Activated CD8-positive, alpha-beta memory T cell treated with anti-CD3 and anti-CD28 coated beads, Interleukin-2, amount 10 ng/mL, durations not matched to agents 7 days and 5 days (primary cell): ENCODE measurements at regions of chr12 and their contacts with region 1.

Region 1: DNA sequence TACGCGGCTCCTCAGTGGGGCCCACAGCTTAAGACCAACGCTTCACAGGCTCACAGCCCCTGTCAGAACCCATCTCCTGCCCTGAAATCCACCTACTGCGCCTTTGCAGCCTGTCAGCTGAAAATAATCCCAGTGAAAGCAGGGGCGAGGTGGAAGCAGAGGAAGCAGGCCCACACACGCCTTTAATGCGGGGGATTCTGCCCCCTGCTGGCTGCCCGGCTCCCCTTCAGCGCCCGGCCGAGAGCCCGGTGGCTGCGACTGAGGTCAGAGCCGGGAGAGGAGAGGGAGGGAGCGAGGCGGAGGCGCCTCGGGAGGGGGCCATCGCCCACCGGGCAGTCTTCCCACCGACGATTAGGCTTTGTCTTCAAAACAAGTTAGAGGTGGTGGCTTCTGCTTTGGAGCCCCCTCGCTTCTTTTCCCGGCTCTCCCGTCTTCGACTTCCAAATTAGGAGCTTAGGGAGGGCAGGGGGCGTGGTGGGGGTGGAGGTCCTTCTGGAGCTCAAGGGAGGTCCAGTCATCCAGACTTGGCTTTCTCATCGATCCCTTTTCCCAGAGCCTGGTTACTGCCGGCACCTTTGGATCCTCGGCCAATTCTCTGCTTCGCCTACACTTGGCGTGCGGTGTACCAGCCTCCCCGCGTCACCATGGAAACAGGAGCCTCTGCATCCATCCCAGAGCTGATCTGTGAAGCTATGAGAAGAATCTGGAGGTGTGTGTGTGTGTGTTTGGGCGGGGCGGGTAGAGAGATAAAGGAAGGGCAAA is 25.2 kb upstream of the RND1 start:
- DNase-seq: peak; percentile 81
- ATAC-seq: peak; percentile 100
- H3K4me3 Mint-ChIP-seq: peak overlapping the region; percentile 7
- H3K27ac Mint-ChIP-seq: no peak overlapping the region
- H3K4me1 Mint-ChIP-seq: peaks cover 10% of the 10 kb centered on the region
- H3K27me3 Mint-ChIP-seq: peaks cover 17% of the 10 kb centered on the region

Region 2: DNA sequence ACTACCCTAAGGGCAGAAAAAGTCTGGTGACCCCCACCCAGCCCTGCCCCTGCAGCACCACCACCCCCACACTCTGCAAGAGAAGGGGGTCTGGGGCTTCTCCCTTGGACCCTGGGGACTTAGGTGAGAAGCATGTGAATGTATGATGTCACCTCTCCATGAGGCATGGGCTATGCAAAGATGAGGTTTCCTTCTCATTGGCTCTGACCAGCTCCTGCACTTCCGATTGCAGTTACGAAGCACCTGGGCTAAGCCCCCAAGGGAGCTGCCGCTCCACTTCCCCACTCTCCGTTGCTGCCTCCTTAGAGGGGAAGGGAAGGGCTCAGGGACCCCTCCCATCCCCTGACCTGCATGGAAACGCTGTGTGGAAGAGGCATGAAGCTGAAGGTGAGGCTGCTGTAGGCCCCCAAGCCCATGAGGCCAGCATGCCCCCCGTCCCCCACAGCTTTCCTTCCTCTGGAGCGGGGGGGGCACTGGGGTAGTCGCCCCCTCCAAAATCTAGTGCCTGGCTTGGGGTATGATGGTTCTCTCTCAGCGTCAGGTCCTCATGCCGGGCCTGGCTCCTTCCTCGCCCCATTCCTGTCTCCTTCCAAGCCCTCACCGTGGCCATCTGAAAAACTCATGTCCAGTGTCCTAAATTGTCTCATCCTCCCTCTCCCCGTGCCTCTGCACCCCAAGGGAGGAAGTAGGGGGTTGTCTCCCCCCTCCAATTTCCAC is 33.4 kb before region 1 on chr12:
- CTCF ChIA-PET with region 1: interaction called, 211 read pairs
- DNase-seq: no peak
- ATAC-seq: no peak
- H3K4me3 Mint-ChIP-seq: no peak overlapping the region
- H3K27ac Mint-ChIP-seq: no peak overlapping the region
- H3K4me1 Mint-ChIP-seq: peaks cover 13% of the 10 kb centered on the region
- H3K27me3 Mint-ChIP-seq: peaks cover under 1% of the 10 kb centered on the region

Region 3: DNA sequence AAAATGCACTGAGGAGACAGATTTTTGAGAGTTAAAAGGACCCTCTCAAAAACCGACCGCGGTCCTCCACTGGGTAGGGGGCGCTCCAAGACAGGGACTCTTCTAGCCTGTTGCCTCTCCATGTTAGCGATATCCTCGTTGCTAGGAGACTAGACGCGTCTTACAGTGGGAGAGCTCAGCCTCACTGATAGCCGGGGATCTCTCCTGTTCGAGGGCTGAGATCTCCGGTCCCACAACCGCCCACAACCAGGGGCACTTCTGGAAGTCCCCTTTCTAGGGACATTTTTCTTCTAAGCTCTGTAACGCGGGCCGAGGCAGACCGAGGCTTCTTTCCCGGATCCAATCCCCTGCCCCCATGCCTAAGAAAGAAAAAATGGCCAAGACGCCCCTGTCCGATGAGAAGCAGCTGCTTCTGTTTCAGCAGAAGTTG is 13.2 kb after region 1 on chr12:
- CTCF ChIA-PET with region 1: interaction called, 82 read pairs
- DNase-seq: peak; percentile 88
- ATAC-seq: peak; percentile 91
- H3K4me3 Mint-ChIP-seq: peak overlapping the region; percentile 38
- H3K27ac Mint-ChIP-seq: peak overlapping the region; percentile 68
- H3K4me1 Mint-ChIP-seq: peaks cover 19% of the 10 kb centered on the region
- H3K27me3 Mint-ChIP-seq: peaks cover 9% of the 10 kb centered on the region

Region 4: DNA sequence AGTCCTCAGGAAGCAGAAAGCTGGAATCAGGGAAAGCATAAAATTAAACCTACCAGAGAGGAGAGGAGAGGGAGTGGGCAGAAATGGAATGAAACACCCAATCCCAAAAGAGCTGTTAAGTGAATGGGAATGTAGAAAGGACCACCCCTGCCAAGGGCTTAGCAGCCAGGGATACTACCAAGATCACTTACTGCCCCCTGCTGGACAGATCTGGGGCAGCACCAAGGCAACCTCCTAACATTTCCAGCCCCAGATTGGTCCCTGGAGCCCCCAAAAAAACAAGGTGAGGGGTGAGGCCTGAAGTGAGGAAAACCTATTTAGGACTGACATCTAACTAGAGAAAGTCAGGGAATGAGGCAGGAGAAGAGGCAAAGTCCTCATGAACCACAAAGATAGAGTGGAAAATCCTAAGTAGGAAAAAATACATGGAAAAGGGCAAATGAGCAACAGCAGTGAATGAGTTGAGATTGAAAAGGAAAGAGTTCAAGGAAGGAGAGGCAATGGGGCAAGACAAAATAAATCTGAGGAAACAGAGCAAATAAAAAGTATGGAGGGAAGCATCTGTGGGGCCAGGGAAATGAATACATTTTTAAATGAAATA is 45.6 kb after region 1 on chr12:
- CTCF ChIA-PET with region 1: interaction called, 16 read pairs
- DNase-seq: peak; percentile 88
- ATAC-seq: peak; percentile 57
- H3K4me3 Mint-ChIP-seq: no peak overlapping the region
- H3K27ac Mint-ChIP-seq: peak overlapping the region; percentile 39
- H3K4me1 Mint-ChIP-seq: peaks cover 28% of the 10 kb centered on the region
- H3K27me3 Mint-ChIP-seq: no peaks in the 10 kb centered on the region

Region 5: DNA sequence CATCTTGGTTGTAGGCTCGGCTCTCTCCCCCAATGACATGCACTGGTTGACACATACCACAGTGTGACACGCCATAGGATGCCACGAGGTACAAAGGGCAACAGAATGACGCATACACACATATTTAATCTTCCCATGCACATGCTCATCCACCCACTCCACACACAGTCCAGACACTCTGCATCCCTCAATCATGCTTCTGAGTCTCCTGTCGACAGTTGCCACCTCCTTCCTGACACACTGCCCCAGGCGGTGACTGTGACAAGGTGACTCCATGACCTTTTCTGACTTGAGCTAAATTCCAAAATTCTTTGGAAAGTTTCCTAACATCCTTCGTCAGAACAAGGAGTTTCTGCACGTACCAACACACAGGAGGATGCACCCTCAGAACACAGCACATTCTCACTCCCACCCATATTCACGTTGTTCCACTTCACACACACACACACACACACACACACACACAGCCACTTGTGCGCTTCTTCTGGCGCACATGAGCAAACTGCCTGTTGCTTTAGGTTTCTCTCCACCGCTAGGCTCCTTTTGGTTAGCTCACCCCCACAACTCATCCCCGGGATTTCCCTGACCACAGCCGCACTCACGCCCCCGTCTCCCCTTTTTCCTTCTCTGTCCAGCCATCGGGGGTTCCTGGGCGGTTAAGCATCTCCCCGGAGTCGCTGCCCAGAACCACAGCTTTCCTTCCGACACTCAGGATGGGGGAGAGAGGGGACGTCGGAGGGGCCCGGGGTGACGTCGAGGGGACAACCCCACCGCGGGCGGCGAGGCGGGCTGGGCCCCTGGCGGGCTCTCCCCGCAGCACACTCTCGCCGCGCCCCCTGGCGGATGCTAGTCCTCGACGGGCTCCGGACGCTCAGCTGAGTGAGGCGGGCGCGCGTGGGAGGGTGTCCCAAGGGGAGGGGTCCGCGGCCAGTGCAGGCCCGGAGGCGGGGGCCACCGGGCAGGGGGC is 86.8 kb after region 1 on chr12:
- CTCF ChIA-PET with region 1: interaction called, 18 read pairs
- DNase-seq: peak; percentile 81
- ATAC-seq: peak; percentile 62
- H3K4me3 Mint-ChIP-seq: peak overlapping the region; percentile 22
- H3K27ac Mint-ChIP-seq: no peak overlapping the region
- H3K4me1 Mint-ChIP-seq: peaks cover 55% of the 10 kb centered on the region
- H3K27me3 Mint-ChIP-seq: peaks cover 84% of the 10 kb centered on the region